HepG2 (cell line): ENCODE measurements at regions of chr6 and their contacts with region 1.

Region 1: DNA sequence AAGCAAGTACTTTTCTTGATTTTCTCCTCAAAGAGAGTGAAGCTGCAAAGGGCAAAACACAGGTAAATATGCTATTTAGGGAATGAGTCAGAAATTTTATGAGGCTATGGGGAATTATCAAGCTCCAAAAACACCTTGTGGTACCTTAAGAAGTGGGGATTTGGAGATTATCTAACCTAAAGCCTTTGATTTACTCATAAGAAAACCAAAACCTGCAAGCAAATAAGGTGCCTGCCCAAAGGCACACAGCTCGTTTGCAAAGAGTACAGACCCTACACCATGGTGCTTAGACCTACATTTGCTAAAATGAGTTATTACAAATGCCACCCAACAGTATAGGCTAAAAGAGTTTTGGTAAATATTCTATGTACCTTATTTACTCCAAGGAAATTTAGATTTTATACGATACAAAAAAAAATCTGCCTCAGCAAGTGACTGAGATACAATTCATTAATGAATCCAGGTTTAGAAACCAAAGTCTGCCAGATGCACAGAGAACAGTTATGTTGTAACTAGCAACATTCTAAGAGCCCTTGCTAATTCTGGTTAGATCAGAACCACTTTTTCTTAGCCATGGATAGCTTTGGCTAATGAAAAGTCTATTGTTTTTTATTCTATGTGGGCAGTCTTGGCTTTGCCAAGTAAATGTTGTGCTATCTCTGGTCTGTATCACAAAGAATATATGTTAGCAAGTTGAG is 101.5 kb downstream of the KHDC1L start:
- DNase-seq: no peak
- ATAC-seq: no peak
- H3K4me3 ChIP-seq: no peak overlapping the region
- H3K27ac ChIP-seq: no peak overlapping the region
- H3K4me1 ChIP-seq: no peaks in the 10 kb centered on the region
- H3K27me3 ChIP-seq: no peaks in the 10 kb centered on the region
- CTCF ChIP-seq: no peak
- EP300 ChIP-seq: no peak
- POLR2A ChIP-seq: no peak
- RAD21 ChIP-seq: no peak

Region 2: DNA sequence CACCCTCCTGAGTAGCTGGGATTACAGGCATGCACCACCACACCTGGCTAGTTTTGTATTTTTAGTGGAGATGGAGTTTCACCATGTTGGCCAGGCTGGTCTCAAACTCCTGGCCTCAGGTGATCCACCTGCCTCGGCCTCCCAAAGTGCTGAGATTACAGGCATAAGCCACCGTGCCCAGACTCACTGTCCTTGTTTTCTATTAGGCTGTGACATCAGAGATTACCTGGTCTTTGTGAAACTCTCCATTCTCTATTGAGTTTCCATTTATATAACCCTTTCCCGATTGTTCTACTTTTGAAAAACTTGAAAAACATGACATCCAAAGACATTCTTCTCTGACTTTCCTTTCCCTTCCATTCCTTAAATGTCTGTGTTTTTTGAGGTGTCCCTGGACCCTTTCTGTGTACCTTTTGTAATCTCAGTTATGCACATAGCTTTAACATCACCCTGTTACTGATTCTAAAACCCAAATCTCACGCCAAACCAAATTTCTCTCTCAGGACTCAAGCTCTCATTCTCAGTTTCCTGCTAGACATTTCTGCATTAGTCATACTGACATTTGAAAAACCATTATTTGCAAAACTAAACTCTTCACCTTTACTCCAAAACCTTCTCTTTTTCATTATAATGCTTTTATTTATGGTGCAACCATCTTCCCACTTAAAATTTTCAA is 35.5 kb before region 1 on chr6:
- CTCF ChIA-PET with region 1: no interaction called
- POLR2A ChIA-PET with region 1: no interaction called
- in situ Hi-C with region 1: no loop called
- intact Hi-C with region 1: loop called (anchors 2 kb)
- DNase-seq: no peak
- ATAC-seq: no peak
- H3K4me3 ChIP-seq: no peak overlapping the region
- H3K27ac ChIP-seq: no peak overlapping the region
- H3K4me1 ChIP-seq: no peaks in the 10 kb centered on the region
- H3K27me3 ChIP-seq: no peaks in the 10 kb centered on the region
- CTCF ChIP-seq: no peak
- EP300 ChIP-seq: no peak
- POLR2A ChIP-seq: no peak
- RAD21 ChIP-seq: no peak